PC-3 (cell line): ENCODE measurements at regions of chr10 and their contacts with region 1.

Region 1: DNA sequence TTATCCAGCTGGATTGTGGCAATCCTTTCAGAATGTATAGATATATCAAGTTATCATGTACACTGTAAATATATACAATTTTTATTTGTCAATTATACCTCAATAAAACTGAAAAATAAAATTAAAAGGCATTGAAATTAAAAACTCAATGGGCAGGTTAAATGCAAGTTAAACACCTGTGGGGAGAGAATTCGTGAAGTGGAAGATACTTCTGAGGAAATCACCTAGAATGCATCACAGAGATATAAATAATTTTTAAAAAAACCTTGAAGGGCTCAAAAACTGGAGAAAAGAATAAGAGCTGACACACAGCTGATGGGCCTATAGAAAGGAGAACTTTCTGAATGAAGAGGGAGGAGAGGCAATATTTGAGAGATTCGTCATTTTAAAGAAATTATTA is 37.2 kb upstream of the DRGX start:
- DNase-seq: no peak
- ATAC-seq: no peak
- H3K4me3 ChIP-seq: no peak overlapping the region
- H3K27ac ChIP-seq: no peak overlapping the region
- H3K4me1 ChIP-seq: no peaks in the 10 kb centered on the region
- H3K27me3 ChIP-seq: no peaks in the 10 kb centered on the region
- CTCF ChIP-seq: no peak

Region 2: GRCh38 chr10:49419005-49419404 is 14.1 kb before region 1 on chr10:
- CTCF ChIA-PET with region 1: no interaction called
- POLR2A ChIA-PET with region 1: no interaction called
- intact Hi-C with region 1: no loop called
- DNase-seq: peak; percentile 100
- ATAC-seq: peak; percentile 97
- H3K4me3 ChIP-seq: peak overlapping the region; percentile 43
- H3K27ac ChIP-seq: peak overlapping the region; percentile 65
- H3K4me1 ChIP-seq: peaks cover 14% of the 10 kb centered on the region
- H3K27me3 ChIP-seq: no peaks in the 10 kb centered on the region
- CTCF ChIP-seq: no peak; the same call in 1 of the 2 replicates

Region 3: DNA sequence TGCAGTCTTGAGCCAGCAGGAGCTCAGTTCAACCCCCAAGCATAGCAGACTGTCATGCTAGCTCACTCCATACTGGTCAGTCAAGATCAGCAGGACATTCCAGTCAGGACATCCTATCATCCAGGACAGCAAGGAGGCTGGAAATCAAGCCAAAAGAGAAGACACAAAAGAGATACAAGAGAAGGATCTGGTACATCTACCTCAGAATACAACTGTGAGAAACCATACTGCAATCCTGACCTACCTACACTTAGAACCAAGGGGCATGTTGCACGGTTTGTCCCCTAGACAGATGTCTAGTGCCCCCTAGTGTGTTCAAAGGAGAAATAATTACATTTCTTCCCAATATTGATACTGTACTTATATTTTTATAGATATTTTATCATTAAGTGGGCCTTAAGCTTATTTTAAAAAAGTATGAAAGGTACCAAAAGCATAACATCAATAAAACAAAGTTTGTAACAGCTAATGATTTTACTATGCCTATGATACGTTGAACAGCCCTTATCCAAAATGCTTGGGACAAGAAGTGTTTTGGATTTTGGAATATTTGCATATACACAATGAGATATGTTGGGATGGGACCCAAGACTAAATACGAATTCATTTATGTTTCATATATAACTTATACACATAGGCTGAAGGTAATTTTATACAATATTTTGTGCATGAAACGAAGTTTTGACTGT is 79.2 kb after region 1 on chr10:
- CTCF ChIA-PET with region 1: no interaction called
- POLR2A ChIA-PET with region 1: no interaction called
- intact Hi-C with region 1: loop called (anchors 2 kb)
- DNase-seq: peak; percentile 72
- ATAC-seq: peak; percentile 75
- H3K4me3 ChIP-seq: no peak overlapping the region
- H3K27ac ChIP-seq: no peak overlapping the region
- H3K4me1 ChIP-seq: peaks cover 5% of the 10 kb centered on the region
- H3K27me3 ChIP-seq: no peaks in the 10 kb centered on the region
- CTCF ChIP-seq: peak; percentile 99

Region 4: GRCh38 chr10:49534670-49535381 is 101.8 kb after region 1 on chr10:
- CTCF ChIA-PET with region 1: no interaction called
- POLR2A ChIA-PET with region 1: no interaction called
- intact Hi-C with region 1: no loop called
- DNase-seq: peak; percentile 82
- ATAC-seq: peak; percentile 6; the same call in 1 of the 2 replicates
- H3K4me3 ChIP-seq: no peak overlapping the region
- H3K27ac ChIP-seq: peak overlapping the region; percentile 6
- H3K4me1 ChIP-seq: peaks cover 43% of the 10 kb centered on the region
- H3K27me3 ChIP-seq: no peaks in the 10 kb centered on the region
- CTCF ChIP-seq: no peak; the same call in 1 of the 2 replicates